ENCODE measurements at regions of chr6 and their contacts with region 1.

Region 1: GRCh38 chr6:73520688-73521350 is at the start of gene EEF1A1:
- DNase-seq: peak; percentile 99
- H3K4me3 ChIP-seq: peak within 1 kb of the TSS; percentile 99
- H3K27ac ChIP-seq: peak within 1 kb of the TSS; percentile 97
- H3K4me1 ChIP-seq: peaks cover 33% of the 10 kb centered on the region
- CTCF ChIP-seq: no peak
- total RNA-seq, gene EEF1A1: 8,152 and 8,173 TPM in 2 replicates

Region 2: DNA sequence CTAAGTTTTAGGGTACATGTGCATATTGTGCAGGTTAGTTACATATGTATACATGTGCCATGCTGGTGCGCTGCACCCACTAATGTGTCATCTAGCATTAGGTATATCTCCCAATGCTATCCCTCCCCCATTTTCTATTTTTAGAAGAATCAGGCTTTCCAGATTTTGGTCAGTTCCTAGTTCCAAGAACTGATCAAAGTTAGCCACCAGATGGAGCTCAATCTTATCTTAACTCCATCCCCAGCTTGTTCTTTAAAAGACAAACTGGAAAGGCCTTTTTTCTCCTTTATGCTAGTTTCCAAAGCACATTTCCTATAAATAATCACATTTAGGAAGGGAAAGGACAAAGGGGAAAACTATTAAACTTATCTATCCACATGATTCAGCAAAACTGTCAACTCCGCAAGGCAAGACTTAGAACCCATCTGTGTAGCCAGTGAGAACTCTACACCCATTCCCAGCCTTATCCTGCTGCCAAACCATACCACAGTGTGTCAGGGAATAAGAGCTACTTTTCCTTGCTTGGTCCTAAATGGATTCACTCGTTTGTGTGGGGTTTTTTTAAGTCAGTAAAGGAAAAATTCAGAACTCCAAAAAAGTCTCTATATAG is 235.0 kb before region 1 on chr6:
- CTCF ChIA-PET with region 1: no interaction called
- POLR2A ChIA-PET with region 1: no interaction called
- intact Hi-C with region 1: no loop called
- DNase-seq: peak; percentile 37
- H3K4me3 ChIP-seq: no peak overlapping the region
- H3K27ac ChIP-seq: no peak overlapping the region
- H3K4me1 ChIP-seq: no peaks in the 10 kb centered on the region
- CTCF ChIP-seq: peak; percentile 64

Region 3: GRCh38 chr6:73309769-73310502 is 210.9 kb before region 1 on chr6:
- CTCF ChIA-PET with region 1: no interaction called
- POLR2A ChIA-PET with region 1: no interaction called
- intact Hi-C with region 1: loop called (anchors 5 kb)
- DNase-seq: peak; percentile 81
- H3K4me3 ChIP-seq: peak overlapping the region; percentile 75
- H3K27ac ChIP-seq: peak overlapping the region; percentile 65
- H3K4me1 ChIP-seq: peaks cover 24% of the 10 kb centered on the region
- CTCF ChIP-seq: peak; percentile 89

Region 4: GRCh38 chr6:73569121-73569520 is 48.3 kb after region 1 on chr6:
- CTCF ChIA-PET with region 1: interaction called, 10 read pairs
- POLR2A ChIA-PET with region 1: no interaction called
- intact Hi-C with region 1: no loop called
- DNase-seq: no peak
- H3K4me3 ChIP-seq: no peak overlapping the region
- H3K27ac ChIP-seq: no peak overlapping the region
- H3K4me1 ChIP-seq: no peaks in the 10 kb centered on the region
- CTCF ChIP-seq: no peak

Region 5: GRCh38 chr6:73610444-73611275 is 89.8 kb after region 1 on chr6:
- CTCF ChIA-PET with region 1: no interaction called
- POLR2A ChIA-PET with region 1: interaction called, 12 read pairs
- intact Hi-C with region 1: no loop called
- DNase-seq: peak; percentile 51
- H3K4me3 ChIP-seq: no peak overlapping the region
- H3K27ac ChIP-seq: no peak overlapping the region
- H3K4me1 ChIP-seq: no peaks in the 10 kb centered on the region
- CTCF ChIP-seq: peak; percentile 83

Region 6: GRCh38 chr6:73739096-73739495 is 218.3 kb after region 1 on chr6:
- CTCF ChIA-PET with region 1: no interaction called
- POLR2A ChIA-PET with region 1: no interaction called
- intact Hi-C with region 1: no loop called
- DNase-seq: peak; percentile 64
- H3K4me3 ChIP-seq: no peak overlapping the region
- H3K27ac ChIP-seq: no peak overlapping the region
- H3K4me1 ChIP-seq: no peaks in the 10 kb centered on the region
- CTCF ChIP-seq: peak; percentile 95

Region 7: GRCh38 chr6:75284632-75285286 is 1763.9 kb after region 1 on chr6 and contains the start of gene TMEM30A:
- CTCF ChIA-PET with region 1: no interaction called
- POLR2A ChIA-PET with region 1: no interaction called
- intact Hi-C with region 1: loop called (anchors 5 kb)
- DNase-seq: peak; percentile 98
- H3K4me3 ChIP-seq: peak within 1 kb of the TSS; percentile 94
- H3K27ac ChIP-seq: peak within 1 kb of the TSS; percentile 82
- H3K4me1 ChIP-seq: peaks cover 42% of the 10 kb centered on the region
- CTCF ChIP-seq: no peak
- total RNA-seq, gene TMEM30A: 16.4 and 18.2 TPM in 2 replicates

Measured in OCI-LY7 (cell line).